AG04450 (cell line): ENCODE measurements at regions of chr1 and their contacts with region 1.

Region 1: DNA sequence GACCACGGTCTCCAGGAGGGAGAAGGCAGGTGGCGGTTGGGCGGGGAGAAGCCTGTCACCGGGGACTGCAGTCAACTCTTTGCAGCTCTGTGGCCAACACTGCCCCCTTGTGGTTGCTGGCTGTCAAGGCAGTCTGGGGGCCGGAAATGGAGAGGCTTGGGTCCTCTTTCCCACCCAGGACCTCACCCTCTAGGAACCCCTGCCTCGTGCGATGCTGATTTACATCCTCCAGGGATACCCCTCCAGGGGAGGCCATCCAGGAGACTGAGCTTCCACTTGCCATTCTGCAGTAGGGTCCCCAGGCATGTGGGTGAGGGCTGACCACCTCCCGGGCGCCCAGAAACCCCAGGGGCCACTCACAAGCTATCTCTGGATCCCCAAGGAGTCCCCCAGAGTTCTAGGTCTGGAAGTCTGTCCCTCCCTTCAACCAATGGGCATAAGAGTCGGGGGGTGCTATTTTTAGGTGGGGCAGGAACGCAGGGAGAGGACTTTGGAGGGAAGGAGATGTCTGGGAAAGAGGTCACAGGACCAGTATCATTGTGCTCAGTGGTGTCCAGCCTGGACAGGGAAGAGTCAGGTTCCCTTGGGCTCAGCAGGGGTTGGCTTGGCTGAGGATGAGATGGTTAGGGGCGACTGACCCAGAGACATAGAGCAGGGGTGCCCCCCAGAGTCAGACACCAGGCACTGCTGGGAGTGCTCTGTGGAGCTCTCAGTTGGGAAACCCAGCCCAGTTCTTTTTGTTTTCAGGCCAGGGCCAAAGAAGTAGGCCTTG is 7.1 kb upstream of the GPR61 start:
- DNase-seq: peak; percentile 55
- H3K4me3 ChIP-seq: no peak overlapping the region
- H3K27ac ChIP-seq: peak overlapping the region; percentile 52
- H3K27me3 ChIP-seq: peaks cover 7% of the 10 kb centered on the region
- CTCF ChIP-seq: peak; percentile 98

Region 2: GRCh38 chr1:109277434-109278204 is 254.9 kb before region 1 on chr1:
- CTCF ChIA-PET with region 1: interaction called, 21 read pairs
- POLR2A ChIA-PET with region 1: no interaction called
- DNase-seq: no peak
- H3K4me3 ChIP-seq: no peak overlapping the region
- H3K27ac ChIP-seq: peak overlapping the region; percentile 31
- H3K27me3 ChIP-seq: no peaks in the 10 kb centered on the region
- CTCF ChIP-seq: peak; percentile 89

Region 3: DNA sequence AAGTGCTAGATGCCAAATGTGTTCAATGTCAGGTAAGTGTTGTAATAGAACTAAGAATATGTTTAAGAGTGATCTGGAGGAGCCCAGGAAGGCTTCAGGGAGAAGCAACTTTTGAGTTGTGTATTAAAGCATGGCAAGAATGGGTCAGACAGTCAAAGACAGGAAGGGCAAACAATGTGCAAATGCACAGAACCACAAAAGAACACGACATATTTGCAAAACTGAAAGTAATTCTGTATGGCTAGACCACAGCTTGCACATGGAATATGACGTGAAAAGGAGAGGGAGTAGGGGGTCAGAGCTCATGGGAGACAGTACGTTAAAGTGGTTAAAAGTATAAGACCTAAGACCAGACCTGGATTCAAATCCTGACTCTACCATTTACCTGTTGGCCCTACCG is 127.7 kb before region 1 on chr1:
- CTCF ChIA-PET with region 1: interaction called, 32 read pairs
- POLR2A ChIA-PET with region 1: no interaction called
- DNase-seq: no peak
- H3K4me3 ChIP-seq: no peak overlapping the region
- H3K27ac ChIP-seq: no peak overlapping the region
- H3K27me3 ChIP-seq: no peaks in the 10 kb centered on the region
- CTCF ChIP-seq: no peak

Region 4: GRCh38 chr1:109426278-109427170 is 106.0 kb before region 1 on chr1 and contains the start of gene PSMA5:
- CTCF ChIA-PET with region 1: interaction called, 32 read pairs
- POLR2A ChIA-PET with region 1: no interaction called
- DNase-seq: peak; percentile 98
- H3K4me3 ChIP-seq: peak within 1 kb of the TSS; percentile 95
- H3K27ac ChIP-seq: peak within 1 kb of the TSS; percentile 89
- H3K27me3 ChIP-seq: no peaks in the 10 kb centered on the region
- CTCF ChIP-seq: no peak
- polyA plus RNA-seq, gene PSMA5: 127 and 151 TPM in 2 replicates

Region 5: GRCh38 chr1:109493805-109494539 is 38.6 kb before region 1 on chr1 and contains the start of gene CYB561D1:
- CTCF ChIA-PET with region 1: interaction called, 1,351 read pairs
- POLR2A ChIA-PET with region 1: interaction called, 9 read pairs
- DNase-seq: no peak
- H3K4me3 ChIP-seq: peak within 1 kb of the TSS; percentile 98
- H3K27ac ChIP-seq: peak within 1 kb of the TSS; percentile 11
- H3K27me3 ChIP-seq: no peaks in the 10 kb centered on the region
- CTCF ChIP-seq: peak; percentile 88
- polyA plus RNA-seq, gene CYB561D1: 5.0 and 5.4 TPM in 2 replicates

Region 6: GRCh38 chr1:109548321-109549267 is 16.0 kb after region 1 on chr1 and contains the start of gene GNAI3:
- CTCF ChIA-PET with region 1: interaction called, 37 read pairs
- POLR2A ChIA-PET with region 1: no interaction called
- DNase-seq: peak; percentile 85
- H3K4me3 ChIP-seq: peak within 1 kb of the TSS; percentile 98
- H3K27ac ChIP-seq: peak within 1 kb of the TSS; percentile 83
- H3K27me3 ChIP-seq: no peaks in the 10 kb centered on the region
- CTCF ChIP-seq: no peak
- polyA plus RNA-seq, gene GNAI3: 10.2 and 14.8 TPM in 2 replicates